Activated CD8-positive, alpha-beta T cell treated with anti-CD3 and anti-CD28 coated beads for 36 hours (primary cell): ENCODE measurements at regions of chr14 and their contacts with region 1.

Region 1: GRCh38 chr14:75906676-75907280 is 75.0 kb downstream of the TGFB3 start:
- DNase-seq: peak; percentile 79
- ATAC-seq: peak; percentile 42
- H3K4me3 Mint-ChIP-seq: no peak overlapping the region
- H3K27ac Mint-ChIP-seq: no peak overlapping the region
- H3K4me1 Mint-ChIP-seq: no peaks in the 10 kb centered on the region
- H3K27me3 Mint-ChIP-seq: no peaks in the 10 kb centered on the region
- CTCF ChIP-seq: peak; percentile 89

Region 2: GRCh38 chr14:75660630-75661494 is 245.9 kb before region 1 on chr14 and contains the starts of genes ERG28 and TTLL5:
- CTCF ChIA-PET with region 1: no interaction called
- POLR2A ChIA-PET with region 1: no interaction called
- intact Hi-C with region 1: no loop called
- DNase-seq: peak; percentile 97
- ATAC-seq: peak; percentile 97
- H3K4me3 Mint-ChIP-seq: peak within 1 kb of the TSS; percentile 86
- H3K27ac Mint-ChIP-seq: peak within 1 kb of the TSS; percentile 91
- H3K4me1 Mint-ChIP-seq: peaks cover 17% of the 10 kb centered on the region
- H3K27me3 Mint-ChIP-seq: no peaks in the 10 kb centered on the region
- CTCF ChIP-seq: no peak
- total RNA-seq, gene ERG28: 13.4 to 14.9 TPM
- total RNA-seq, gene TTLL5: 23.6 to 27.2 TPM

Region 3: DNA sequence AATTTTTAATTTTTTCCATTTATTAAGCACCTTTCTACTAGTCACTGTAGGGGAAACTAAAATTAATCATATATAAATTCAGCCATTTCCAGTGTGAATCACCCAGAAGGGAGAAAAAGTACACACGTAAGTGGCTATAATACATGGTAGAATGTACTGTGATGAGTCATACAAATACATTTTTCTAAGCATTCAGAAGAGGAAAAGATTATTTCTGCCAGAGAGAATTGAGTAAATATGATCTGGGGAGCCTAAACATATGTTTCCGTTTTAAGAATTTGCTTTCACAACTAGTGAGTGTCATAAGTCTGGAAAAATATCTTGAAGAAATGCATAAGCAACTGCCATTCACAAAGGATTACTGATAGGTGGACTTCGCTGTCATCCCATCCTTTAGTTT is 27.7 kb before region 1 on chr14:
- CTCF ChIA-PET with region 1: interaction called, 35 read pairs
- POLR2A ChIA-PET with region 1: no interaction called
- intact Hi-C with region 1: no loop called
- DNase-seq: no peak
- ATAC-seq: peak; percentile 69
- H3K4me3 Mint-ChIP-seq: no peak overlapping the region
- H3K27ac Mint-ChIP-seq: no peak overlapping the region
- H3K4me1 Mint-ChIP-seq: peaks cover 9% of the 10 kb centered on the region
- H3K27me3 Mint-ChIP-seq: no peaks in the 10 kb centered on the region
- CTCF ChIP-seq: no peak

Region 4: DNA sequence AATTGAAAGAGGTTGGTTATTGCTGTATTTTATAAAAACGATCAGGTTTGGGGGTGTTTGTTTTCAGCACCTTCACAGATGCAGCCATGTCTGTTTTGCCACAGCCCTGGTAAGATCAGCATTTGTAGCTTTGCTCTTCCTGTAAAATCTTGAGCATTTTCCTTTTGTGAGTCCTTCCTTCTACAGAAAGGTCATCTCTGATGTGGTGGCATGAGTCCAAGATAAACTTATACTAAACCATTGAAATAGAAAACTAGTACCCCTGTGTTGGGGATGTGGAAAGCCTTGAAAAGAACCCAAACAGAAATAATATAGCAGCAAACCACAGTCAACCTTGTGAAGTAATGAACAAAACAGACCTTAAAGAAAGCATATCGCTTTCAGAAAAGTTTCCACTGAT is 10.4 kb before region 1 on chr14:
- CTCF ChIA-PET with region 1: interaction called, 10 read pairs
- POLR2A ChIA-PET with region 1: no interaction called
- intact Hi-C with region 1: no loop called
- DNase-seq: no peak
- ATAC-seq: no peak
- H3K4me3 Mint-ChIP-seq: no peak overlapping the region
- H3K27ac Mint-ChIP-seq: no peak overlapping the region
- H3K4me1 Mint-ChIP-seq: peaks cover 6% of the 10 kb centered on the region
- H3K27me3 Mint-ChIP-seq: no peaks in the 10 kb centered on the region
- CTCF ChIP-seq: no peak

Region 5: GRCh38 chr14:75968456-75968855 is 61.7 kb after region 1 on chr14:
- CTCF ChIA-PET with region 1: interaction called, 16 read pairs
- POLR2A ChIA-PET with region 1: no interaction called
- intact Hi-C with region 1: no loop called
- DNase-seq: no peak
- ATAC-seq: no peak
- H3K4me3 Mint-ChIP-seq: no peak overlapping the region
- H3K27ac Mint-ChIP-seq: no peak overlapping the region
- H3K4me1 Mint-ChIP-seq: no peaks in the 10 kb centered on the region
- H3K27me3 Mint-ChIP-seq: no peaks in the 10 kb centered on the region
- CTCF ChIP-seq: no peak